Thyroid gland (tissue), 4 donors: ENCODE measurements at regions of chr16 and their contacts with region 1.

Region 1: DNA sequence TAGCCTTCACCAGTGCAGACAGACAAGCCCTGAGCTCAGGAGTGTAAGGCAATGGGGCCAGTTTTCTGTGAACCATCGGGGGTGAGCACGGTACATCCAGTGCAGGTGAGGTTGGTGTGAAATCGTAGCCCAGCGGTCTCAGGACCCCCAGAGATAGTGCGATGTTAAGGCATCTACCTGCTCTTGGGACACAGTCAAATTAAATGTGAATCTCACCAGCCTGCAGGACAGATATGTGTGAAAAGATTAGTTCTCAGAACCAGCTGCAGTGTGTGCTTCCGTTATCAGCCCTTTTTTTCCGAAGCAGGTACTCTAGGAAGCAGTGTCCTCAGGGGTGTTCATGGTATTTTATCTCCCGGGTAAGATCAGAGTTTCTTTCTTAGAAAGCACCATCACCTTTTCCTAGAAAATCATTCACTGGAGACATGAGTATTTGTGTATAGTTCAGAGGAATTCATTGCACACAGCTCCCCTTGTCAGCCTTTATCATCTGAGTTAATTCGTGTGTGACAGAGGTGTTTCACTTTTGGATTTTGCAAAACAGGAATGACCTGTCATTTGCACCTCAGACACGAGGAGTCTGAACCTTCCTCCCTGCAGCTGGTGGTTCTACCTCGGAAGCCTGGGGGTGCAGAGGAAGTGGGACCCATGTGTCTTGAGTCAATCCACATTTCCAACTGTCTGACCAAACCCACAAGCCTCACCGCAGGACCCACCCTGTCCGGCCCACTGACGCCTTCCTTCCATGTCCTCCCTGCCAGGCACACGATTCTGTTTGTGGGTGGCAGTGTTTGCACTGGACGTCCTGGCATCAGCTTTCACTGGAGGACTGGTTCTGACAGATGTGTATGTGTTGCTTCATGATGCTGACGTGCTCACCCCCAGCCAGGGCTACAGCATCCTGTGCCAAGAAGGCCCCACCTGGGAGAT is 107.8 kb downstream of the CLEC16A start:
- DNase-seq: no peak
- H3K4me3 ChIP-seq: no peak overlapping the region
- H3K27ac ChIP-seq: peak overlapping the region in 1 of 3 donors; percentile 85
- H3K4me1 ChIP-seq: peaks cover 48 to 60% of the 10 kb centered on the region in 2 donors
- H3K27me3 ChIP-seq: no peaks in the 10 kb centered on the region
- CTCF ChIP-seq: no peak
- POLR2A ChIP-seq: no peak

Region 2: GRCh38 chr16:11105038-11105903 is 53.1 kb after region 1 on chr16:
- intact Hi-C with region 1: no loop called
- DNase-seq: peak; percentile 36 to 44
- H3K4me3 ChIP-seq: no peak overlapping the region
- H3K27ac ChIP-seq: peak overlapping the region; percentile 28 to 92 (median 84)
- H3K4me1 ChIP-seq: peaks cover 49 to 66% of the 10 kb centered on the region in 2 donors
- H3K27me3 ChIP-seq: no peaks in the 10 kb centered on the region
- CTCF ChIP-seq: peak in 2 of 6 experiments; percentile 14 to 37
- POLR2A ChIP-seq: peak in 1 of 2 donors; percentile 3

Region 3: DNA sequence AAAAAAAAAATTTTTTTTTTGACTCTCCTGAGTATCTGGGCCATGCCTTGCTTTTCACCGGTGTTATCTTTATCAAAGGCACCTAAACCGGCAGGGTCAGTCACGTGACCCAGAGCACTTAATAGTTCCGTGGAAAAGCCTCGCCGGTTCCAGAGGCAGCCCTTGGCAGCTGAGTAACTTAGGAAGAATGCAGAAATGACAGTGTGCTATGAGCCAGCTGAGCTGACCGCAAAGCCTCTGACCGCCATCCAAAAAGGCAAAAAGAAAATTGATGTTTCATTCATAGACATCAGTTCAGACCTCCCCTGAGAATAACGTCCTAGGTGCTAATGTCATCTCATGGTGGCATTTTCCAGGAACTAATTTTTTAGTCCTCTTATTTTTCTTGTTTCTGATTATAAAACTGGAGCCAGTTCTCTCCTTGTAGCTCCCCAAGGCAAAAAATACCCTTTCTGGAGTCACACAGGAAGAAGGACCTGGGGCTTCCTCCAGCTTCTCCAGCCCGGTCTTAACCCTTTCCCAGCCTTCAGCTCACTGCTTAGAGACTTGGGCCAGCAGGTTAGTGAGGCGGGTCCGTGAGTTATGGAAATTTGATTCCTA is 81.3 kb after region 1 on chr16:
- intact Hi-C with region 1: loop called (anchors 10 kb)
- DNase-seq: peak; percentile 95 to 97
- H3K4me3 ChIP-seq: no peak overlapping the region
- H3K27ac ChIP-seq: peak overlapping the region; percentile 23 to 99 (median 87)
- H3K4me1 ChIP-seq: peaks cover 57 to 90% of the 10 kb centered on the region in 2 donors
- H3K27me3 ChIP-seq: no peaks in the 10 kb centered on the region
- CTCF ChIP-seq: peak in 2 of 6 experiments; percentile 7 to 15
- POLR2A ChIP-seq: peak in 1 of 2 donors; percentile 45